ENCODE measurements at regions of chr17 and their contacts with region 1.

Region 1: GRCh38 chr17:75530837-75531729 is 5.6 kb downstream of the LLGL2 start:
- DNase-seq: no peak
- H3K4me3 Mint-ChIP-seq: no peak overlapping the region
- H3K27ac Mint-ChIP-seq: no peak overlapping the region
- H3K4me1 Mint-ChIP-seq: peaks cover 38% of the 10 kb centered on the region
- H3K27me3 Mint-ChIP-seq: peaks cover 8% of the 10 kb centered on the region

Region 2: DNA sequence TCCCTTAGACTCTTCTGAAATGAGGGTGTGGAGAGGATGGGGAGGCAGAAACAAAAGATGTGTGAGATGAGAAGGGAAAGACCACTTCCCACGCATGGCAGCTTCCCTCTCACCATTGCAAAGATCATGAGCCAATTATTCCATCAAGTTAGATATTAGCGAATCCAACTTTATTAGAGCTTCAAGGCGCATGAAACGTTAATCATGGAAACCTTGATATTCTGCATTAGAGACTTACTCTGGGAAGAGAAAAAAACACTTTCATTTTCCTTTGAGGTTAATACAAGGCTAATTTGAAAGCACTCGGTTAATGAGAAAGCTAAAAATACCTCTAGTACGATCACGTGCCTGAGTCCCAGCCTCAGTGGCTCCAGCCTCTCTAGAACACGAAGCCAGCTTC is 1548.2 kb before region 1 on chr17:
- CTCF ChIA-PET with region 1: no interaction called
- POLR2A ChIA-PET with region 1: interaction called, 10 read pairs
- DNase-seq: no peak
- H3K4me3 Mint-ChIP-seq: no peak overlapping the region
- H3K27ac Mint-ChIP-seq: no peak overlapping the region
- H3K4me1 Mint-ChIP-seq: peaks cover 11% of the 10 kb centered on the region
- H3K27me3 Mint-ChIP-seq: peaks cover 4% of the 10 kb centered on the region

Region 3: DNA sequence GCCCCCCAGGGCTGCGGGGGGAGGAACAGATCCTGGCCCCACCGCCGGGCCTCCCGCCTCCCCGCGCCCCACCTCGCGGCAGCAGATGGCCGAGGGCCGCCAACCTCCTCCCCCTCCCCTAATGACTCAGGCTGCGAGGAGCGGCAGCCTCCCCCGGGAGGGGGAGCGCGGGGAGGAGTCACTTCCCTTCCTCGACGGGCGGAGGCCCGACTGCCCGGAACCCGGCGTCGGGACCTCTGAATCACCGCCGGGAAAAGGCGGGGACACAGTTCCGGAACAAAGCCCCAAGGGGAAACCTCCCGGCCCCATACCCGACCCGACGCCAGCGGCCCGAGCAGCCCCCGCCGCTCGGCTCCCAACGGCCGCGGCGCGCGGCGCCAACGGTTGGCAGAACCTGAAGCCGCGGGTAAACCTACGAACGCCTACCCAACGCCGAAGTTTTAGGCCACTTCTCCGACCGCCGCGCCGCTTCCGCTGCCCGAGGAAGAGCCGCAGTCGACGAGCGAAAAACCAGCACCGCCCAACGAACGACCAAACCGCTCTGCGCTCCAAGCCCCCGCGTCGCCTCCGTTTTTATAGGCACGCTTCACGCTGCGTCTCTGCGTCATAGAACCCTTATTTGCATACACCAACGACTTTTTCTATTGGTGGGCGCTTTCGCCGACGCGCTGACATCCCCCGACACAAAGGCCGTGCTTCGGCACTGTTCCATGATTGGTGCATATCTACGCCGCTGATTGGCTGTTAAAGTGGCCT is 248.3 kb after region 1 on chr17:
- CTCF ChIA-PET with region 1: no interaction called
- POLR2A ChIA-PET with region 1: no interaction called
- DNase-seq: peak; percentile 97
- H3K4me3 Mint-ChIP-seq: peak overlapping the region; percentile 89
- H3K27ac Mint-ChIP-seq: peak overlapping the region; percentile 98
- H3K4me1 Mint-ChIP-seq: peaks cover 51% of the 10 kb centered on the region
- H3K27me3 Mint-ChIP-seq: peaks cover 2% of the 10 kb centered on the region

Measured in activated CD4-positive, alpha-beta T cell treated with anti-CD3 and anti-CD28 coated beads, Interleukin-2, amount 10 ng/mL, durations not matched to agents 7 days and 5 days (primary cell).